ENCODE measurements at regions of chr2 and their contacts with region 1.

Region 1: GRCh38 chr2:14779252-14779651 is 146.7 kb downstream of the LRATD1 start:
- DNase-seq: no peak
- H3K4me3 ChIP-seq: no peak overlapping the region
- H3K27ac ChIP-seq: no peak overlapping the region
- H3K4me1 ChIP-seq: peaks cover 19% of the 10 kb centered on the region
- H3K27me3 ChIP-seq: no peaks in the 10 kb centered on the region
- CTCF ChIP-seq: no peak

Region 2: GRCh38 chr2:14720319-14720718 is 58.9 kb before region 1 on chr2:
- CTCF ChIA-PET with region 1: no interaction called
- dilution Hi-C with region 1: no loop called
- in situ Hi-C with region 1: no loop called
- intact Hi-C with region 1: no loop called
- DNase-seq: peak; percentile 67
- H3K4me3 ChIP-seq: no peak overlapping the region
- H3K27ac ChIP-seq: no peak overlapping the region
- H3K4me1 ChIP-seq: no peaks in the 10 kb centered on the region
- H3K27me3 ChIP-seq: no peaks in the 10 kb centered on the region
- CTCF ChIP-seq: no peak

Region 3: DNA sequence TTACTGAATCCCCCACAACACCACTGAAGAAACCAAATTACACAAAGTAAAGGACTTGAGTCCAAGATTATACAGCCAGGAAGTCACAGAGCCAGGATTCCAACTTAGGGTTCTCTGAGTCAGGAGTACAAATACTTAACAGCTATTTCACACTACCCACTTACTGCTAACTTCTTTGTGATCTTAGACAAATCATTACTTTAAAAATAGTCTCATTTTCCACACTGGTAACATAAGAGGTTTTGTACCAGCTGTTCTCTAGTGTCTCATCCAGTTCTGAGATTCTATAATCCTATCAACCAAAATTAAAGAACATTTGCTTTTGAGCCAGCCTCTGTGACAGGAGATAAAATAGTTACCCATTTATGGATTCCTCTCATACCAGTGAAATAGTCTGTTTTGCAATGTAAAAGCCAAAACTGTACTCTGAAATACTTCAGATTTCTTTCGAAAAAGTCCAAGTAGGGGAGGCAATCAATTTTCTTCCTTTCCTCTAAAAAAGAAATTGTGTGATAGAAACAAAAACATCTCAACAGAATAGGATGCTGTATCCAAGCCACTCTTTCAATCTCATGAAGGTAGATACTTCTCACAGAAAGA is 10.9 kb after region 1 on chr2:
- CTCF ChIA-PET with region 1: no interaction called
- dilution Hi-C with region 1: no loop called
- in situ Hi-C with region 1: no loop called
- intact Hi-C with region 1: loop called (anchors 1 kb)
- DNase-seq: no peak
- H3K4me3 ChIP-seq: no peak overlapping the region
- H3K27ac ChIP-seq: no peak overlapping the region
- H3K4me1 ChIP-seq: no peaks in the 10 kb centered on the region
- H3K27me3 ChIP-seq: no peaks in the 10 kb centered on the region
- CTCF ChIP-seq: no peak

Measured in mammary epithelial cell (primary cell).